Mammary epithelial cell (primary cell): ENCODE measurements at regions of chr11 and their contacts with region 1.

Region 1: GRCh38 chr11:126163074-126163700 is 48.3 kb downstream of the RPUSD4 start:
- DNase-seq: peak; percentile 72
- H3K4me3 ChIP-seq: no peak overlapping the region
- H3K27ac ChIP-seq: no peak overlapping the region
- H3K4me1 ChIP-seq: peaks cover 9% of the 10 kb centered on the region
- H3K27me3 ChIP-seq: peaks cover 2% of the 10 kb centered on the region
- CTCF ChIP-seq: peak in 1 of 2 donors; percentile 7

Region 2: DNA sequence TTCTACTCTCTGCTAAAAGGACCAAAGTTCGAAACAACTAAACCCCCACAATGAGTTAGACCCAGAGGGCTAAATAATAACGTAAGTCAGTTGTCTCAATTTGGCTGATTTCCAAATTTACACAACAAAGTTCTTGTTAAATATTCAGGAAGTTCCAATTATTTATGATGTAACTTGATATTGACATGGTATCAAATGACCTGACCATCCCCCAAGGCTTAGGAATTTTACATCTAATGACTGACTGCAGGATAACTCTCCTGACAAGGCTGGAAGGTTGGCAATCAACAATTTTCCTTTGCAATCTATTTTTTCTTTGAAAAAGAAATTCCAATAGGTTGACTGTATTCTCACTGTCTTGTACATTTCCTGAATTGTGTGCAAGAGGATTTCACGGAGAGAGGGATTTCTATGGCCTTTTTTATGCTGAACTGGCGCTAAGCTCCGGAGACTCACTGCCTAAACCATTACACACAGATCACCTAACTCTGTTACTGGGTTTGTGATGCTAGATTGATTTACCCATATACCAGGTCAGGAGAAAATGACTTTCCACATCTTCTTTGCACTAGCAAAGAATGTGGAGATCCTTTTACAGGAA is 90.9 kb before region 1 on chr11:
- CTCF ChIA-PET with region 1: no interaction called
- dilution Hi-C with region 1: loop called (anchors 5 kb)
- in situ Hi-C with region 1: no loop called
- intact Hi-C with region 1: no loop called
- DNase-seq: no peak
- H3K4me3 ChIP-seq: no peak overlapping the region
- H3K27ac ChIP-seq: no peak overlapping the region
- H3K4me1 ChIP-seq: no peaks in the 10 kb centered on the region
- H3K27me3 ChIP-seq: no peaks in the 10 kb centered on the region
- CTCF ChIP-seq: no peak